ENCODE measurements at regions of chr7 and their contacts with region 1.

Region 1: GRCh38 chr7:53744403-53744760 is 708.9 kb downstream of the POM121L12 start:
- DNase-seq: no peak
- H3K4me3 Mint-ChIP-seq: no peak overlapping the region
- H3K27ac Mint-ChIP-seq: no peak overlapping the region
- H3K4me1 Mint-ChIP-seq: no peaks in the 10 kb centered on the region
- H3K27me3 Mint-ChIP-seq: no peaks in the 10 kb centered on the region

Region 2: GRCh38 chr7:53675835-53676234 is 68.5 kb before region 1 on chr7:
- intact Hi-C with region 1: no loop called
- DNase-seq: no peak
- H3K4me3 Mint-ChIP-seq: no peak overlapping the region
- H3K27ac Mint-ChIP-seq: no peak overlapping the region
- H3K4me1 Mint-ChIP-seq: no peaks in the 10 kb centered on the region
- H3K27me3 Mint-ChIP-seq: no peaks in the 10 kb centered on the region

Region 3: DNA sequence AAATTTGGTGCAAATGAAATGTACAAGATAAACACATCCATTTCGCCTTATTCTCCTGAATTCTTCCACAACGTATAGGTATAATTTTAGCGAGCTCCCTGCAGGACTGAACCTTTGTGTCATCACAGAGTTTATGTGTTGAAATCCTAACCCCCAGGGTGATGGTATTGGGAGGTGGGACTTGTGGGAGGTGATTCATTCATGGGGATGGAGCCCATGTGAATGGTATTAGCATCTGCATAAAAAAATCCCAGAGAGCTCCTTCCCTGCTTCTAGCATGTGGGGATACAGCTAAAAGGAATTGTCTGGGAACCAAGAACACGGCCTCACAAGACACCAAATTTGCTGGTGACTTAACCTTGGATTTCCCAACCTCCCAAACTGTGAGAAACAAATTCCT is 56.4 kb after region 1 on chr7:
- intact Hi-C with region 1: loop called (anchors 10 kb)
- DNase-seq: no peak
- H3K4me3 Mint-ChIP-seq: no peak overlapping the region
- H3K27ac Mint-ChIP-seq: no peak overlapping the region
- H3K4me1 Mint-ChIP-seq: no peaks in the 10 kb centered on the region
- H3K27me3 Mint-ChIP-seq: no peaks in the 10 kb centered on the region

Measured in activated T-helper 1 cell treated with anti-CD3 and anti-CD28 coated beads, Interleukin-12 subunit alpha, Interleukin-12 subunit beta, Interleukin-2, Interleukin-4 antibody, amounts not matched to agents 30 ng/mL and 10 ng/mL and 1 ng/mL, durations not matched to agents 14 hours and 24 hours and 36 hours (primary cell).